ENCODE measurements at regions of chr3 and their contacts with region 1.

Region 1: DNA sequence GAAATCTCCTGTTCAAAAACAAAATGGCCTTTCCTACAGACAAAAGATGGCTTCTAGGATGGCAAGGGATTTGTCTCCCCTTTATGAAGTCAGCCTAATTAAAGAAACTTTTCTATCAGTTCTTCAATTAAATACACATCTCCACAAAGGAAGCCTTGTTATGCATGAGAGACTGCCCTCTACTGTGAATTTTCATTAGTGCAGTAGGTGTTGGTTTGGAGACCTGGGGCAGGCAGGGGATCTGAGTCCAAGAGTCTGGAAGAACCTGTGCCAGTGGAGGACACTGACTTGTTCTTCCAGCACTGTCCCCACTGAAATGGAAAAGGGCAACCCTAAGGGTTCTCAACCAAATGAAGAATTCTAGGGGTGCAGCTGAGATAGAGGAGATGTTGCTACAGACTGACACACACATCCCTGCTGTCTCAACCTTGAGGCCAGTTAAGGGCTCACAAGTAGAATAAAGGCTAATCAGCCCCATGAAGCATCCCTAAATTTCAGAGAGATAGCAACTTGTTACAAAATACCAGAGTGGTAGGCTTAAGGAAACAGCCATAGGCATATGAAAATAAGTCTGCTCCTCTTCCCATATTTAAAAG is 174.0 kb upstream of the PRICKLE2 start:
- DNase-seq: peak in 22 of 42 donors; percentile 8 to 74 (median 41)

Region 2: GRCh38 chr3:64267721-64268604 is 131.3 kb before region 1 on chr3:
- intact Hi-C with region 1: loop called (anchors 10 kb)
- DNase-seq: peak; percentile 42 to 89 (median 68)

Measured in head of caudate nucleus (tissue), 42 donors.